Activated CD8-positive, alpha-beta T cell treated with anti-CD3 and anti-CD28 coated beads, Interleukin-2, amount 10 ng/mL, durations not matched to agents 7 days and 5 days (primary cell): ENCODE measurements at regions of chr1 and their contacts with region 1.

Region 1: DNA sequence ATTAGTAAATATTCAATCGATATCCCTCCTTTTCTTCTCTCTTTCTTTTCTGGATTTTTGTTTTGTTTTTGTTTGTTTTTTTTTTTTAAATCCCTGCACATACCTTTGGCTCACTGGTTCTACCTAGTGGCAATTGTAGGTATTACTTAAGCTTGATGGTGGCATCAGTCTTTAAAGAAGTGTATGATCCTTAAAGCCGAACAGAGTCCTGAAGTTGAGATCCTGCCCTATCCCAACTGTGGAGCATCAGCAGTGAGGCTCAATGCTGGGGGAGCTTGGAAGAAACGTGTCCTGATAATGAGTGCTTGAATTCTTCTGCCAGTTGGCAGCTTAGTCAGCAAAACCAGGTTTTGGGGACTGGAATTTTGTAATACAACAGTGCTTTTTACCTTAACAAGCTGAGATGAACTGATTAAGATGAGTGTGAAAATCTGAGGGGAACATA is 60.8 kb downstream of the FASLG start:
- DNase-seq: no peak
- ATAC-seq: no peak
- H3K4me3 Mint-ChIP-seq: no peak overlapping the region
- H3K27ac Mint-ChIP-seq: peak overlapping the region; percentile 0
- H3K4me1 Mint-ChIP-seq: peaks cover 47% of the 10 kb centered on the region
- H3K27me3 Mint-ChIP-seq: no peaks in the 10 kb centered on the region

Region 2: DNA sequence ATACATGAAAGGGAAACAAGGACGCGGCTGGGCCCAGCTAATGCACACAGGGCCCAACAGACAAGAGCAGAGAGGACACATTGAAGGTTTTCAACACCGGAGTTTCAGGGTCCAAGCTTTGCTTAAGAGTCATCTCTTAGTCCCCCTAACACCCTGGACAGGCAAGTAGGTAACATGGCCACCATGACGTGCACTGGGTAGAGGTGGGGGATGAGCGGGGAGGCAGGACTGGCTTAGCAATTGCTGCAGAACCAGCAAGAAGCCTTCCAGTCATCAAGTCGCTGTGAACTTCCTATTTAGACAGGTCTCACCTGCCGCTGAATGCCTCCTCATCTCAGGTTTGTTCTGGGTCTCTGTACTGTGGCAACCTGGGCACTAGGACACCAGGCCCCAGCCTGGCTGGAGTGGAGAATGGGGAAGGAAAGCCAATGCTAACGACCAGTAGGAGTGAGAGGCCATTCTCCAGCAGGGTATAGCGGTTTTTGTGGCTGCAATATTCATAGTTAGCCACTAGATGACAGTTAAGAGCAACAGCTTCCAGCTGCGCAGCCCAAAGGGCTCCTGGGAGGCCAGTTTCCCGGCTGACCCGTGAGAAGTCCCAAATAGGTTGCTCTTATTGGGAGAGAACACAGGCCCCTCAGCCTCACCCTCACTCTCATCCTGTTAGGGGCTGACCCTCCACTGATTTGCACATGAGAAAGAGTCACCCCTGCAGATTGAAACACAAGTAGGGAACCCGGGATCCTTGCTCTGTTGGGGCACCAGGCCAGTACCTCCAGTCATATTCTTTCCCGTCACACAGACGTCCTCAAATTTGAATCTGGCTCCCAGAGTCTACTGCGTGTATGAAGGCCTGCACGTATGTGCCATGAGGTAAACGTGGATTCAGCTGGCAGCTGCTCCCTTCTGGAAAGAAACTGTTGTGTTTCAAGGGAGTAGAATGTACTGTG is 269.9 kb before region 1 on chr1:
- CTCF ChIA-PET with region 1: interaction called, 27 read pairs
- POLR2A ChIA-PET with region 1: no interaction called
- DNase-seq: peak; percentile 60
- ATAC-seq: peak; percentile 92
- H3K4me3 Mint-ChIP-seq: no peak overlapping the region
- H3K27ac Mint-ChIP-seq: no peak overlapping the region
- H3K4me1 Mint-ChIP-seq: peaks cover 25% of the 10 kb centered on the region
- H3K27me3 Mint-ChIP-seq: no peaks in the 10 kb centered on the region

Region 3: GRCh38 chr1:172609528-172609927 is 110.2 kb before region 1 on chr1:
- CTCF ChIA-PET with region 1: interaction called, 174 read pairs
- POLR2A ChIA-PET with region 1: interaction called, 3 read pairs
- DNase-seq: no peak
- ATAC-seq: peak; percentile 82
- H3K4me3 Mint-ChIP-seq: no peak overlapping the region
- H3K27ac Mint-ChIP-seq: peak overlapping the region; percentile 26
- H3K4me1 Mint-ChIP-seq: peaks cover 18% of the 10 kb centered on the region
- H3K27me3 Mint-ChIP-seq: no peaks in the 10 kb centered on the region

Region 4: GRCh38 chr1:172638885-172639831 is 80.6 kb before region 1 on chr1:
- CTCF ChIA-PET with region 1: interaction called, 24 read pairs
- POLR2A ChIA-PET with region 1: interaction called, 3 read pairs
- DNase-seq: peak; percentile 87
- ATAC-seq: peak; percentile 81
- H3K4me3 Mint-ChIP-seq: peak overlapping the region; percentile 69
- H3K27ac Mint-ChIP-seq: peak overlapping the region; percentile 95
- H3K4me1 Mint-ChIP-seq: peaks cover 74% of the 10 kb centered on the region
- H3K27me3 Mint-ChIP-seq: no peaks in the 10 kb centered on the region

Region 5: GRCh38 chr1:172671591-172671990 is 48.1 kb before region 1 on chr1:
- CTCF ChIA-PET with region 1: interaction called, 21 read pairs
- POLR2A ChIA-PET with region 1: interaction called, 3 read pairs
- DNase-seq: no peak
- ATAC-seq: no peak
- H3K4me3 Mint-ChIP-seq: no peak overlapping the region
- H3K27ac Mint-ChIP-seq: peak overlapping the region; percentile 25
- H3K4me1 Mint-ChIP-seq: peaks cover 89% of the 10 kb centered on the region
- H3K27me3 Mint-ChIP-seq: no peaks in the 10 kb centered on the region

Region 6: GRCh38 chr1:172708452-172708851 is 11.3 kb before region 1 on chr1:
- CTCF ChIA-PET with region 1: interaction called, 25 read pairs
- POLR2A ChIA-PET with region 1: interaction called, 3 read pairs
- DNase-seq: peak; percentile 61
- ATAC-seq: peak; percentile 81
- H3K4me3 Mint-ChIP-seq: peak overlapping the region; percentile 43
- H3K27ac Mint-ChIP-seq: peak overlapping the region; percentile 65
- H3K4me1 Mint-ChIP-seq: peaks cover 52% of the 10 kb centered on the region
- H3K27me3 Mint-ChIP-seq: peaks cover 2% of the 10 kb centered on the region

Region 7: DNA sequence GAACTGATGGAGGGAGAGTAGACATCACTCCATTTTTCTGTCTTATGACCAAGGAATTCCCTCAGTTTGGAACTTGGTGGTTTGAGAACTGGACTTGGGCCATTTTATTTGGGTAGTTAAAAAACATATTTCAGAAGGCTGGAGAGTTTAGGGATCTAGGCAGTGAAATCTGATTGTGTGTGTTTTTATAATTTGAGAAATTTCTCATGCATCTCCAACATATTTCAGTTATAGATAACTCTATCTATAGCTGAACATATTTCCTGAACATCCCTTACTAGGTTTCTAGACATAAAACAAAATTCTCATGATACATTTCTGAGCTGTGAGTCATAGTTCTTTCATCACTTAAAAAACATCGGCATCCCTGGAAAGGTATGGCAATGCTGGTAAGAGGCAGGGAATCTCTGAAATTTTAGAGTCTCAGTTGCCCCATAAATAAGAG is 41.9 kb after region 1 on chr1:
- CTCF ChIA-PET with region 1: no interaction called
- POLR2A ChIA-PET with region 1: no interaction called
- DNase-seq: no peak
- ATAC-seq: no peak
- H3K4me3 Mint-ChIP-seq: no peak overlapping the region
- H3K27ac Mint-ChIP-seq: no peak overlapping the region
- H3K4me1 Mint-ChIP-seq: peaks cover 25% of the 10 kb centered on the region
- H3K27me3 Mint-ChIP-seq: no peaks in the 10 kb centered on the region

Region 8: DNA sequence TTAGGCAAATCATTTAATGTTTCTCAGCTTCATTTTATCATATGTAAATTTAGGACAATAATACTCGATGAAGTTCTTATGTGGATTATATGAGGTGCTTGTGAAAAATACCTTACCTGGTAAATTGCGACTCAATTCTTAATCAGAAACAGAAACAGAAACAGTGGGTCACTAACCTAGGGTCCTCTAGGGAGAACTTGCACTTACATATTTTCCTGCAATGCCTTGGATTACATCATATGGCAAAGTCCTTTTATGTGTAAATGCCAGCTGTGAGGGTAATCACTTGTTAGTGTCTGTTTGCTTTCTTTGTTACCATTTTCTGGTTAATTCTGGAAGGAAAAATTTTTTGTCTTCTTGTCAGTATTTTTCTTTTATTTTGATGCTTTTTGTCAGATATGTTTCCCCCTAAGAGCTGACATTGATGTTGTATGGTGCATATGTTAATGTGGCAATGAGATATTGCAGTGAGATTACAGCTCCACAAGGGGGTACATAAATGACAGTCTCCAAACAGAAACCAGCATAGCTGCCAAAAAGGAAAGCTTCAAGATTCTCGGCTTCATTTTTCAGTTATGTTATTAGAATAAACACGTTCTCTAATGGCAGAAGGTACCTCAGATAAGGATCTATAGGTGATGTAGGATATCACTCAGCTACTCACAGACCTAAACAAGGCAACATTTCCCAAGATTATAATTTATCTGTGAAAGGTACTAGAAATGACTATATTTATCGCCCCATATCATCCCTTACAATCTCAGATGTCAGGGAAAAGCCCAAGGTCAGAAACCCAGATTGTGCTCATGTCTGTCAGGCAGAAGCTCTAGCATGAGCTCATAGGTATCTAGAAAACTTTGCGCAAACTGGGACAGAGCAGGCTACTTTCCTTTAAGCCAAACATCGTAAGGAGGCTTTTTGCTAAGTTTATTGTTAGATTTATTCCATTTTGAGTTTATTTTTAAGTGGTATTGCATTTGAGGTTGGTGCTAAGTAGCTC is 59.0 kb after region 1 on chr1:
- CTCF ChIA-PET with region 1: no interaction called
- POLR2A ChIA-PET with region 1: no interaction called
- DNase-seq: peak; percentile 32
- ATAC-seq: peak; percentile 73
- H3K4me3 Mint-ChIP-seq: peak overlapping the region; percentile 16
- H3K27ac Mint-ChIP-seq: peak overlapping the region; percentile 17
- H3K4me1 Mint-ChIP-seq: peaks cover 31% of the 10 kb centered on the region
- H3K27me3 Mint-ChIP-seq: no peaks in the 10 kb centered on the region

Region 9: DNA sequence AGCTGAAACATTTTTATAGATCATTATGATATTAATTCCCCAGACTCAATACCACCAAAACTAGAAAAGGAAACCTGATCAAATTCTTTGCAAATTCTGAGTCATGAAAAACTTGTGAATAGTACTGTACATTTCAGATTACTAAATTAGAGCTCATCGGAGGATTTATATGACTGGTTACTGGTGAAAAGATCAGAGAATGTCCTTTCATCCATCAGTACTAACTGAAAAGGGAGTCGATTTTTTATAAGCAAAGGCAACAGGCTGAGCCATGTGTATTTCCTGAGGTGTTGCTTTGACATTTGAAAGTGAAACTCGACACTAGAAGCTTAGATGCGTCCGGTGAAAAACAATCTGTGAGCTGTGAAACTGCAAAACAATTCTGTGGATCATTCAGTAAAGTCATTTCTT is 175.3 kb after region 1 on chr1:
- CTCF ChIA-PET with region 1: no interaction called
- POLR2A ChIA-PET with region 1: no interaction called
- DNase-seq: peak; percentile 62
- ATAC-seq: peak; percentile 91
- H3K4me3 Mint-ChIP-seq: peak overlapping the region; percentile 70
- H3K27ac Mint-ChIP-seq: peak overlapping the region; percentile 93
- H3K4me1 Mint-ChIP-seq: peaks cover 49% of the 10 kb centered on the region
- H3K27me3 Mint-ChIP-seq: peaks cover 1% of the 10 kb centered on the region